GM12878 (cell line): ENCODE measurements at regions of chr4 and their contacts with region 1.

Region 1: DNA sequence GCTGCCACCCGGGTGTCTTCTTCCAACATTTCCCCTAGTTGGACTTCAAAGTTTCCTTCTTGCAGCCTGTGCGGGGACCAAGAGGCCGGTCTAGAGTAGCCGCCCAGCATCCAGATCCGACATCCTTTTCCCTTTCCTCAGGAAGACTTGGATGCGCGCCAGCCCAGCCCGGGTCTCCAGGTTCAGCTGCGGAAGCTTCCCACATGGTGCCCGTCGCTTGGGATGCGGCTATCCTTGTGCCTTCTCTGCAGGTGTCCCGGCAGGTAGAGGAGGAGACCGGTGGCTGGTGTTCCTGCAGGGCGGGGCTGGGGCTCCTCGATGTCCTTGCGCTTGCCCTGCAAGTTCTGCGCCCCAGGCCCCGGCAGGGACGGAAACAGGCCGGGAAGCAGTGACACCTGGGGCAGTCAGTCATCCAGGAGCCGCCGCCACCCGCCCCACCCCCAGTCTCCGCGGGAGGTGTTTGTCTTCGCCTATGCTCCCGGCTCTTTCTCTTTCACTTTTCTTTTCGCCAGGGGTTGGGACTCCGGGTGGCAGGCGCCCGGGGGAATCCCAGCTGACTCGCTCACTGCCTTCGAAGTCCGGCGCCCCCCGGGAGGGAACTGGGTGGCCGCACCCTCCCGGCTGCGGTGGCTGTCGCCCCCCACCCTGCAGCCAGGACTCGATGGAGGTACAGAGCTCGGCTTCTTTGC is at the start of gene IL15:
- DNase-seq: no peak
- ATAC-seq: peak; percentile 79
- H3K4me3 ChIP-seq: peak within 1 kb of the TSS; percentile 96
- H3K27ac ChIP-seq: peak within 1 kb of the TSS; percentile 90
- H3K4me1 ChIP-seq: peaks cover 8% of the 10 kb centered on the region
- H3K27me3 ChIP-seq: no peaks in the 10 kb centered on the region
- CTCF ChIP-seq: no peak
- EP300 ChIP-seq: no peak
- POLR2A ChIP-seq: peak; percentile 62; the same call in 1 of the 2 replicates
- RAD21 ChIP-seq: no peak
- polyA plus RNA-seq, gene IL15: 6.0 to 7.3 TPM

Region 2: DNA sequence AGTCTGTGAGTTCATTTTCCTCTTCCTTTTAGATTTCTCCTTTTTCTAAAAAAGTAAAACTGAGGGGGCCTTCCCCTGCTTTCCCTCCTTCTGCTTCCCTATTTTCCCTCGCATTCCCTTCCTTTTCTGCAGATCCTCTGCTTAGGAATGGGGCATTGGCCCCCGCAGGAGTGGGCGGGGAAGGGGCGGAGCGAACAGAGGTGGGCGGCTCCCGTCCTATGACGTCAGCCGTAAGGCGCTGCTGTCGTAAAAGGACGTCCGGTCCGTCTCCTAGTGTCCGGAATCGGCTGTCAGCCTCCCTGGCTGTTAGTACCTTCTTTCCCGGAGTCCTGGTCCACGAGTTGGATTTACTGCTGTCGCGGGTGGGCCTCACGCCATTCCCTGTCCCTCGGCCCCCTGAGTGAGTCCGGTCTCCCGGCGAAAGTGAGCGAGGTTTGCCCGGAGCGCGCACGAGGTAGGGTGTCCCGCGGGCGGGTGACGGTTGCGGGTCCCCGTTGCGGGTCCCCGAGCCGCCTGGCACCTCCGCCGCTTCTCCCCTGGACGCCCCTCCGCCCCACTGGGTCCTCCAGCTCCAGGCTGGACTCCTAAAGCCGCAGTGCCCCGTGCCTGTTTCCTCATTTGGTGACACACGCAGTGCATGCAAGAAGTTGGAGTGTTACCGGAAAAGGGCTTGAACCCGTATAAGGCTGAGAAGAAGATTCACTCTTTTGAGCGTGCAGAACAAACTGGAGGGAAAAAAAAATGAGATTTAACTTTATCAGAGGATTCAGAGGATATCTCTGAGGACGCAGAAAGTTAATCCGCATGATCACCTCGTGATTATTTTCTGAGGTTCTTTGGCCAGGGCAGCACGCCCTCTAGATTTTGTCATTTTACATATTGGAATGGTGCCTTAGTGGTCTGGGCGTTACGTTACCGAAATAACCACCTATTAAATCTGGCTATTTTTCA is 415.3 kb before region 1 on chr4 and contains the start of gene ZNF330:
- CTCF ChIA-PET with region 1: no interaction called
- POLR2A ChIA-PET with region 1: no interaction called
- RAD21 ChIA-PET with region 1: no interaction called
- SMC1A ChIA-PET with region 1: no interaction called
- in situ Hi-C with region 1: no loop called
- intact Hi-C with region 1: loop called (anchors 10 kb)
- DNase-seq: peak; percentile 53
- ATAC-seq: peak; percentile 93
- H3K4me3 ChIP-seq: peak within 1 kb of the TSS; percentile 91
- H3K27ac ChIP-seq: peak within 1 kb of the TSS; percentile 90
- H3K4me1 ChIP-seq: peaks cover 4% of the 10 kb centered on the region; the same call in 1 of the 2 replicates
- H3K27me3 ChIP-seq: no peaks in the 10 kb centered on the region
- CTCF ChIP-seq: peak in 2 of 3 experiments; percentile 31 to 33; a peak in 3 of 6 replicates
- EP300 ChIP-seq: 0 out of 4 replicates have a peak, but pooled peaks of 1 of the 2 experiments have one; percentile 14
- POLR2A ChIP-seq: peak; percentile 94
- RAD21 ChIP-seq: no peak
- polyA plus RNA-seq, gene ZNF330: 40.1 to 44.5 TPM

Region 3: GRCh38 chr4:141346144-141346543 is 290.1 kb before region 1 on chr4:
- CTCF ChIA-PET with region 1: no interaction called
- POLR2A ChIA-PET with region 1: no interaction called
- RAD21 ChIA-PET with region 1: no interaction called
- SMC1A ChIA-PET with region 1: no interaction called
- in situ Hi-C with region 1: no loop called
- intact Hi-C with region 1: loop called (anchors 5 kb)
- DNase-seq: no peak
- ATAC-seq: peak; percentile 56; the same call in 2 of the 3 replicates
- H3K4me3 ChIP-seq: no peak overlapping the region
- H3K27ac ChIP-seq: no peak overlapping the region
- H3K4me1 ChIP-seq: peaks cover 5% of the 10 kb centered on the region; the same call in 1 of the 2 replicates
- H3K27me3 ChIP-seq: no peaks in the 10 kb centered on the region
- CTCF ChIP-seq: peak; percentile 29 to 55 (median 36); a peak in 3 of 6 replicates
- EP300 ChIP-seq: no peak
- POLR2A ChIP-seq: no peak
- RAD21 ChIP-seq: peak; percentile 83

Region 4: GRCh38 chr4:141464366-141464765 is 171.9 kb before region 1 on chr4:
- CTCF ChIA-PET with region 1: no interaction called
- POLR2A ChIA-PET with region 1: no interaction called
- RAD21 ChIA-PET with region 1: no interaction called
- SMC1A ChIA-PET with region 1: no interaction called
- in situ Hi-C with region 1: no loop called
- intact Hi-C with region 1: no loop called
- DNase-seq: no peak
- ATAC-seq: no peak
- H3K4me3 ChIP-seq: no peak overlapping the region
- H3K27ac ChIP-seq: no peak overlapping the region
- H3K4me1 ChIP-seq: no peaks in the 10 kb centered on the region
- H3K27me3 ChIP-seq: no peaks in the 10 kb centered on the region
- CTCF ChIP-seq: no peak
- EP300 ChIP-seq: no peak
- POLR2A ChIP-seq: no peak
- RAD21 ChIP-seq: no peak

Region 5: GRCh38 chr4:141497627-141498026 is 138.6 kb before region 1 on chr4:
- CTCF ChIA-PET with region 1: no interaction called
- POLR2A ChIA-PET with region 1: no interaction called
- RAD21 ChIA-PET with region 1: interaction called, 4 read pairs
- SMC1A ChIA-PET with region 1: interaction called, 4 read pairs
- in situ Hi-C with region 1: no loop called
- intact Hi-C with region 1: loop called (anchors 5 kb)
- DNase-seq: peak; percentile 46
- ATAC-seq: peak; percentile 97
- H3K4me3 ChIP-seq: no peak overlapping the region
- H3K27ac ChIP-seq: no peak overlapping the region
- H3K4me1 ChIP-seq: 0 out of 2 replicates have a peak, but pooled peaks cover 4% of the 10 kb centered on the region
- H3K27me3 ChIP-seq: no peaks in the 10 kb centered on the region
- CTCF ChIP-seq: no peak
- EP300 ChIP-seq: 0 out of 4 replicates have a peak, but pooled peaks of 1 of the 2 experiments have one; percentile 19
- POLR2A ChIP-seq: no peak
- RAD21 ChIP-seq: peak; percentile 26

Region 6: DNA sequence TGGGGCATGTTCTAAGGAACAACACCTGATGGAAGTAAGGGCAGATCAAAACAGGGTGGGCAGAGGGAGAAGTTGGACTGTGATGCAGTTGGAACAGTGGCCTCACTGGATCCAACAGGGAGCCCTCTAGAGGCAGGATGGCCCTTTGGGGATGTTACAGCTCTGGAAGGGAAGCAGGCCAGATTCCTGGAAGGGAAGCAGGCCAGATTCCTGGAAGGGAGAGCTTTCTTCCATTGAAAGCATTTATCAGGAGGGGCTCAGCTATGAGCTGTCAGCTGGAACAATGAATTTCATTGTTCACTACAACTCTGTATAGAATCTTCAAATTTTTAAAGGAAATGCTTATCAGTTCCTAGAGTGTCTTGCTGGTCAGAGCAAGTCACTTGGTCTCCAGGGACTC is 17.9 kb after region 1 on chr4:
- CTCF ChIA-PET with region 1: interaction called, 6 read pairs
- POLR2A ChIA-PET with region 1: interaction called, 6 read pairs
- RAD21 ChIA-PET with region 1: interaction called, 8 read pairs
- SMC1A ChIA-PET with region 1: interaction called, 11 read pairs
- in situ Hi-C with region 1: no loop called
- intact Hi-C with region 1: loop called (anchors 2 kb)
- DNase-seq: no peak
- ATAC-seq: no peak
- H3K4me3 ChIP-seq: no peak overlapping the region
- H3K27ac ChIP-seq: no peak overlapping the region
- H3K4me1 ChIP-seq: peaks cover 6% of the 10 kb centered on the region
- H3K27me3 ChIP-seq: no peaks in the 10 kb centered on the region
- CTCF ChIP-seq: peak; percentile 14 to 32 (median 30); a peak in 3 of 6 replicates
- EP300 ChIP-seq: no peak
- POLR2A ChIP-seq: no peak
- RAD21 ChIP-seq: no peak; the same call in 1 of the 2 replicates

Region 7: GRCh38 chr4:141659539-141659938 is 23.3 kb after region 1 on chr4:
- CTCF ChIA-PET with region 1: interaction called, 6 read pairs
- POLR2A ChIA-PET with region 1: interaction called, 7 read pairs
- RAD21 ChIA-PET with region 1: interaction called, 8 read pairs
- SMC1A ChIA-PET with region 1: interaction called, 11 read pairs
- in situ Hi-C with region 1: no loop called
- intact Hi-C with region 1: loop called (anchors 2 kb)
- DNase-seq: no peak
- ATAC-seq: peak; percentile 35
- H3K4me3 ChIP-seq: no peak overlapping the region
- H3K27ac ChIP-seq: peak overlapping the region; percentile 26; the same call in 1 of the 2 replicates
- H3K4me1 ChIP-seq: peaks cover 10% of the 10 kb centered on the region
- H3K27me3 ChIP-seq: no peaks in the 10 kb centered on the region
- CTCF ChIP-seq: no peak
- EP300 ChIP-seq: no peak
- POLR2A ChIP-seq: no peak
- RAD21 ChIP-seq: no peak

Region 8: GRCh38 chr4:141711014-141711610 is 74.9 kb after region 1 on chr4:
- CTCF ChIA-PET with region 1: interaction called, 3 read pairs
- POLR2A ChIA-PET with region 1: interaction called, 4 read pairs
- RAD21 ChIA-PET with region 1: interaction called, 7 read pairs
- SMC1A ChIA-PET with region 1: interaction called, 6 read pairs
- in situ Hi-C with region 1: no loop called
- intact Hi-C with region 1: loop called (anchors 2 kb)
- DNase-seq: no peak
- ATAC-seq: peak; percentile 78
- H3K4me3 ChIP-seq: no peak overlapping the region
- H3K27ac ChIP-seq: no peak overlapping the region
- H3K4me1 ChIP-seq: no peaks in the 10 kb centered on the region; the same call in 1 of the 2 replicates
- H3K27me3 ChIP-seq: no peaks in the 10 kb centered on the region
- CTCF ChIP-seq: peak; percentile 49 to 56 (median 54)
- EP300 ChIP-seq: no peak
- POLR2A ChIP-seq: no peak
- RAD21 ChIP-seq: peak; percentile 63

Region 9: DNA sequence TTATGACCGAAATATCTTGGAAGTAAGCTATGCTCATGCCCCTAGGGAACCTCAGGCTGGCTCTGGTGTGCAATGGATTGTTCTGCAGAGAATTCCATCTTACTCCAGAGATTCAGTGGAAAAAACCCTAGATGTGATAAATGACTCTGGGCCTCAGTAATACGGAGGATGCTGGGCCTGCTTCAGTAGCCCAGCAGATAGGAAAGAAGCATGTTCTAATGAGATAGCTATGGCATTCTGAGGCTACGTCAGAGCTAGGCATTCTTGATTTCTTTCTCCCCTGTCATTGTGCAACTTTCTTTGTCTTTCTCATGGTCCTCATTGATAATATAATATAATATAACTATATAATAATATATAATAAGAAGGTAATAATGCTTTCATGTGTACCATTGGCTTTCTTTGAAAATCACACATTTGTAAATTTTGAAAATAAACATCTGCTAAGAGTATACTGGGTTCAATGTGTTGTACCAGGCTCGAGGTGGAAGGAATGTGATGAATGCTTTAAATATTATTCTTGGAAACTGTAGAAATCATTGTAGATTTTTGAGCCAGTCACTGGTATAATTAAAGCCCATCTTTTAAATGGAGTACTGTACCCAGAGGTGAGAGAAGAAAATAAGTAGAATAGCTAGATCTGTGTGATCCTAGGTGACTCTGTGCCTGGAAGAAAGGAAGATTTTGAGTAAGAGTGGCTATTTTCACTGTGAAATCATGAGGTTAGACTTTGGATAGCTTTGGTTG is 152.1 kb after region 1 on chr4:
- CTCF ChIA-PET with region 1: no interaction called
- POLR2A ChIA-PET with region 1: no interaction called
- RAD21 ChIA-PET with region 1: no interaction called
- SMC1A ChIA-PET with region 1: no interaction called
- in situ Hi-C with region 1: no loop called
- intact Hi-C with region 1: no loop called
- DNase-seq: no peak
- ATAC-seq: no peak
- H3K4me3 ChIP-seq: no peak overlapping the region
- H3K27ac ChIP-seq: no peak overlapping the region
- H3K4me1 ChIP-seq: no peaks in the 10 kb centered on the region
- H3K27me3 ChIP-seq: no peaks in the 10 kb centered on the region
- CTCF ChIP-seq: no peak
- EP300 ChIP-seq: no peak
- POLR2A ChIP-seq: no peak
- RAD21 ChIP-seq: no peak